ENCODE measurements at regions of chr3 and their contacts with region 1.

Region 1: DNA sequence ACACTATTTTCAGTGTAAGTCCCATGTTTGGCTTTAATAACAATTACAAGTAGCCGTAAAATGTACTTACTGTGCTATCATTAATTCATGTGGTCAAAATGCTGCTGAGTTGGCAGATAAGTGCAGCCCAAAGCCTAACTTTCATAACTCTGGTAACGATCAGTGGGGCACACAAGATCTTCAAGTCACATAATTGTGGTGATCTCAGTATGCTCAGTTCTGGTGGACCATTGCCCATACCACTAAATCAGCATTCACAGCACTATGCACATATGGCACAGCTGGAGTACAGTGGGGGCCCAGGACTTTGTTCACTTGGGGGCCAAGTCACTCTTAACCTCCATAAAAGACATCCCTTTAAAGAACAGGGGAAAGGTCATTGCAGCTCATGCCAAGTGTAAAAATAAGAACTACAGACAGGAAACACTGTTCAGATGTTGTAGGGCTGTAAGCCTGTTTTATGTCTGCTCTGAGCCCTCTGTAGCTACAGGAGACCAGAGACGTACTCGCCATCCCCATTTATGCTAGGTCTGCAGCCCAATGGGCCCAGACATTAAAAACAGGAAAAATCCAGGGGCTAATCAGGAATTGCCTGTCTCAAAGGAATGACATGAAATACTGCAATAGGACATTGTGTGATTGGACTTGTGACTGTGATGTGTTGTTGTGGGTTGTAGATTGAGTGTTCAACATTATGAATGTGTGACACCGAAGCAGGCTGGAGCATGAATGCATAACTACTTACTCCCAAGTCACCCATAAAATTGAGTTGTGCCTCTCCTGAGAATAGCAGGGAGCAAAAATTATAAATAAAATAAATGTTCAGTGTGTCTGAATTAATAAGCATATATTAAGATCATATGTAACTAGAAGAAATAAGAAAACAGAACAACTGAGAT is 282.5 kb upstream of the EPHA3 start:
- DNase-seq: no peak

Region 2: DNA sequence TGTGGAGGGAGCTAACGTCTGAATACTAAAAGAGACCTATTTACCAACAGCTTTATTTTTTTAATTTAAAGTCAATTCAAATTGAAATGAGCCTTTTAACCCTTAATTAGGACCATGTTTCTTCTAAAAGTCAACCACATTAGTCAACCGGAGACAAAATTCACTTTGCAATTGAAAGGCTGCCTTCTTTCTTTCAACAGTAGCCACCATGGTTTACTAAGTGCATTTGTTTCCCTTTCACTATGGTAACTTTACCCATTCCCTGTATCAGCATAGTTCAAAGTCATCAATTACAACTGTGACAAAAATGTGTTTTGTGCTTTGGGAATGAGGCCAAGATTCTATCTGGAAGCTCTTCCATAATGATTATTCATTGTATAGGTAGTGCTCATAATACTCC is 507.9 kb after region 1 on chr3:
- intact Hi-C with region 1: loop called in 1 of 2 experiments (anchors 10 kb)
- DNase-seq: no peak